Aorta (tissue), 5 donors: ENCODE measurements at regions of chr12 and their contacts with region 1.

Region 1: DNA sequence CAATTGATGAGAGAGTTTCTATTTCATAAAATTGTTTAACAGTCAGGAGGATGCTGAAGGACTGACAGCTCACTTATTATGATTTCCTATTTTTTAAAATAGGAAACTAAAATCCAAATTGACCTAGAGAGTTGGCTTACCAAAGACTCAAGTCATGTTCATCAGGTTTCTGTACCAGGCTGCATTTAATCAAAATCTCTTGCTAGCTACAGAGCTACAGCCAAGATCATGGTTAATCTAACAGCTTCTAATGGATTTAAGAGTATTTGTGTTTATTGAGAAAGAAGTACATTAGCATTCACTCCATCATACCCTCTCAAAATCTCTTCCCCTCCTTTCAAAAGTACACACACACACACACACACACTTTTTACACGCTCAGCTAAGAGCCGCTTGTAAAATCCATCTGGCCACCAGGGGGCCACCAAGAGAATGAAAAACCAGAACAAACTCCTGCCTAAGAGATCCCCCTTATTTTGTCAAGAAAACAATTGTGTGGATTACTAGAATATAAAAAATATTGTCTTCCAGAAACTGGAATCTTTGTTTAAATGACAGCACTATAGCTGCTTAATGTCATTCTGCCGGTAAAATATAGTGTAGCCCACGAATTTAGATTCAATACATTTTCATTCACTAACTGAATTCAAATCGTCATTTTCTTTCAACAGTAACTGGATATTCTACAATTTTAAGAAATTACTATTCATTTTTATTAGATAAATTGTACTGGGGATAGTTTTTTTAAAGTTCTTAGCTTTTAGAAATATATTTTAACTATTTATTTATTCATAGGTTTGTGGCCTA is 334.0 kb downstream of the BTG1 start:
- DNase-seq: peak; percentile 77 to 88
- ATAC-seq: peak; percentile 78
- H3K4me3 ChIP-seq: no peak overlapping the region
- H3K27ac ChIP-seq: no peak overlapping the region
- H3K4me1 ChIP-seq: no peaks in the 10 kb centered on the region
- H3K27me3 ChIP-seq: no peaks in the 10 kb centered on the region

Region 2: DNA sequence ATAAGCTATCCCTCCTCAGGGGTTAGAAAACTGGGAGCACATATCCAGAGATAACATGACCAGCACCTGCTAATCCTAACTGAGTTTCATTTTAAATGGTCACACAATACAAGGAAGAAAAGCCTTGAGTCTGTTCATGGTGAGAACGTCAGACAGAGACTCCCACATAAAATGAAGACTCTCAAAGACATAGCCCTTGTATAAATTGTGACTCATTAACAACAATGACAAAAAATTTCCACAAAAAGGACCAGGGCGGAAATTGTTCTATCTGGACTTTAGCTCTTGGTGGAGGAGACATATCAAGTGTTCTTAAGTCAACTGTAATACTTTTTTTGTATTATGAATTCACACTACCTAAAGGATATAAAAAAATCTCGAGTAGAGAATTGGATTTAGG is 315.3 kb before region 1 on chr12:
- intact Hi-C with region 1: no loop called
- DNase-seq: no peak
- ATAC-seq: no peak
- H3K4me3 ChIP-seq: no peak overlapping the region
- H3K27ac ChIP-seq: no peak overlapping the region
- H3K4me1 ChIP-seq: no peaks in the 10 kb centered on the region
- H3K27me3 ChIP-seq: no peaks in the 10 kb centered on the region

Region 3: GRCh38 chr12:91677556-91677955 is 134.1 kb before region 1 on chr12:
- intact Hi-C with region 1: no loop called
- DNase-seq: no peak
- ATAC-seq: no peak
- H3K4me3 ChIP-seq: no peak overlapping the region
- H3K27ac ChIP-seq: no peak overlapping the region
- H3K4me1 ChIP-seq: peaks cover 0 to 3% of the 10 kb centered on the region in 2 donors
- H3K27me3 ChIP-seq: peaks cover 0 to 1% of the 10 kb centered on the region in 2 donors

Region 4: GRCh38 chr12:91985002-91985787 is 173.5 kb after region 1 on chr12:
- intact Hi-C with region 1: loop called in 1 of 2 experiments (anchors 10 kb)
- DNase-seq: no peak
- ATAC-seq: no peak
- H3K4me3 ChIP-seq: no peak overlapping the region
- H3K27ac ChIP-seq: peak overlapping the region in 1 of 2 donors; percentile 45
- H3K4me1 ChIP-seq: peaks cover 8 to 23% of the 10 kb centered on the region in 2 donors
- H3K27me3 ChIP-seq: no peaks in the 10 kb centered on the region

Region 5: DNA sequence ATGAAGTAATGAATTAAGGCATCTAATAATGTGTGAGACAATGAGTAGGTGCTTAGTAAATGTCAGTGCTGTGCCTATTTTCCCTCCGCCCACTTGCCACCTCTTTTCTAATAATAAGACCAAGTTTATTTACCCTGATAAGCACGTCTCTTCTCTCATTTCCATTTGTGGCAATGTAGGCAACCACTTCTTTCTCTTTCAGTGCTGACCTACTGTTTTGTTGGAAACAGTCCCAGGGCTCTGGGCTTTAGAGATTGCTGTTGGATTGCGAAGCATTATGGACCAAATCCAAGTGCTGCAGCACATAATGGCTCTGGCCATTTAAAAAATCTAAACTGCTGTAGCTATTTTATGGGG is 749.8 kb after region 1 on chr12:
- intact Hi-C with region 1: loop called (anchors 10 kb)
- DNase-seq: peak in 1 of 2 donors; percentile 53
- ATAC-seq: peak; percentile 82
- H3K4me3 ChIP-seq: no peak overlapping the region
- H3K27ac ChIP-seq: no peak overlapping the region
- H3K4me1 ChIP-seq: peaks cover 2 to 13% of the 10 kb centered on the region in 2 donors
- H3K27me3 ChIP-seq: no peaks in the 10 kb centered on the region